Common myeloid progenitor, CD34-positive (primary cell): ENCODE measurements at regions of chr19 and their contacts with region 1.

Region 1: GRCh38 chr19:18291590-18292461 is 10.4 kb upstream of the JUND start:
- DNase-seq: peak; percentile 90 to 92 (median 90)
- H3K4me3 ChIP-seq: peak overlapping the region; percentile 44 to 90 (median 77)
- H3K27ac ChIP-seq: peak overlapping the region; percentile 77 to 95
- H3K4me1 ChIP-seq: peaks cover 4 to 69% (median 40%) of the 10 kb centered on the region in 4 experiments
- H3K27me3 ChIP-seq: no peaks in the 10 kb centered on the region

Region 2: GRCh38 chr19:18304458-18305310 is 12.9 kb after region 1 on chr19:
- CTCF ChIA-PET with region 1: interaction called, 14 read pairs
- POLR2A ChIA-PET with region 1: interaction called, 31 read pairs
- DNase-seq: peak; percentile 87 to 93 (median 91)
- H3K4me3 ChIP-seq: peak overlapping the region; percentile 25 to 77 (median 61)
- H3K27ac ChIP-seq: peak overlapping the region; percentile 95 to 97
- H3K4me1 ChIP-seq: peaks cover 0 to 59% (median 43%) of the 10 kb centered on the region in 4 experiments
- H3K27me3 ChIP-seq: no peaks in the 10 kb centered on the region

Region 3: DNA sequence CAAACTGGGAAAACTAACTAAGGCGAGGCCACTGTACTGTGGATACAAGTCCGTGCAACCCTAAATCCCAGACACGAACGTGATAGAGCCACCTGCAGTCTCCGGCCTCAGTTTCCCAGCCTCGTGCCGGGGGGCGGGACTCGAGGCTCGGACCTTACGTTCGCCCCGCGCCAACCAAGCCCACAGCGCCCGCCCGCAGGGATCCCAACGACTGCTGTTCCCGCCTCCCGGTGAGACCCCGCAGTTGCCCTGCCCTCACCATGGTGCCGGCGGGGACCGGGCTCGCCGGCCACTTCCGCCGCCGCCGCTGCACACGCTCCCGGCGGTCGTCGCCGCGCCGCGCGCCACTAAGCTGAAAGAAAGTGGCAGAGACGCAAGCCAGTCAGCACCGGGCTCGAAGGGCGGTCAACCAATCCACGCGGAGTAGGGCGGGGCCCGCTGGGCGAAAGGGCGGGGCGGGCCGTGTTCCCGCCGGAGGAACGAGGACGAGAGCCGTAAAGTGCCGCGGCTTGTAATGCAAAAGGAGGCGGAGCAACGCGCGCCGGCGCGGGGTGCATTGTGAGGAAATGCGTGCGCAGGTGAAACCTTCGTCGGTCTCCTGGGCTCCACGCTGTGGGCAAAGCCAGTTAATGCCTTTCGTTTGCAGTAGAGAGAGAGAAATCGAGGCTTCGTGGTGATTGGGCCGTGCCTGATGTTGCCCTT is 31.1 kb after region 1 on chr19 and contains the start of gene LSM4:
- CTCF ChIA-PET with region 1: interaction called, 15 read pairs
- POLR2A ChIA-PET with region 1: interaction called, 24 read pairs
- DNase-seq: peak; percentile 99
- H3K4me3 ChIP-seq: peak within 1 kb of the TSS; percentile 63 to 95 (median 82)
- H3K27ac ChIP-seq: peak within 1 kb of the TSS; percentile 51 to 89
- H3K4me1 ChIP-seq: peaks cover 13 to 62% (median 56%) of the 10 kb centered on the region in 4 experiments
- H3K27me3 ChIP-seq: no peaks in the 10 kb centered on the region